ENCODE measurements at regions of chr14 and their contacts with region 1.

Region 1: GRCh38 chr14:21428930-21429329 is 27.0 kb downstream of the CHD8 start:
- DNase-seq: peak; percentile 61
- ATAC-seq: peak; percentile 90

Region 2: DNA sequence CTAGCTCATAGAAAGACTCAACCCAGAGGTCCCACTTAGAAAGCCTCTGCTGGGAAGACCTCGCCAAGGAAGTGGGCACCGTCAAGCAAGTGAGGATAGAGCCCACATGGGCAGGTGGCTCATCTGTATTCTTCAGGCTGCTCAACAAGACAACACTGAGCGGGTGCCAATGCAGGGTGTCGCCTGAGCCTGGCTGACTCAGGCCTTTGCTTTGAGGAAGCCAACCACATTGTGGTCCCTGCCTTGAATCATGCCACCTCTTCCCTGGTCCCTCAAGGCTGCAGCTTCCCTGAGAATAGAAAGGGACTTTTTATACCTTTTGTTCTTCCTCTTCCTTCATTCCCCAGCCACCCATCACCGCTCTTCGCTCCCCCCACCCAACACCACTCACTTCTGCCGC is 392.2 kb before region 1 on chr14:
- intact Hi-C with region 1: no loop called
- DNase-seq: no peak
- ATAC-seq: no peak

Region 3: DNA sequence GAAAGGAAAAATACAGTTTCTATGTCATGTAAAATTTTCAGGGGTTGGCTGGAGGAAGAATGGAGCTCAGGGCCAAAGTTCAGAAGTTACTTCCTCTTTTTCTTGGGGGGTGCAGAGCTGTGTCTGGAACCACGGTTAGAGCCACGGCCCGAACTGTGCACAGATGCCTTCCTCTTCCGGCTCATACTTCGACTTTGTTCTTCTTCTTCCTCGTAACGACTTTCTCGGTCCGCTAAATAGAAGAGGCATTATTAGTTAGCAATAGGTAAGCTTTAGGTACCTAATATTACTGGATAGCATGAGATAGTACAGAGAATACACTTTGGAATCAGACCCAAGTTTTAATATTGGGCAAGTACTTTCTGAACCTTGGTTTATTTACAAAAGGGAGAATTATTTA is 76.3 kb before region 1 on chr14:
- intact Hi-C with region 1: no loop called
- DNase-seq: peak; percentile 38
- ATAC-seq: peak; percentile 48

Region 4: DNA sequence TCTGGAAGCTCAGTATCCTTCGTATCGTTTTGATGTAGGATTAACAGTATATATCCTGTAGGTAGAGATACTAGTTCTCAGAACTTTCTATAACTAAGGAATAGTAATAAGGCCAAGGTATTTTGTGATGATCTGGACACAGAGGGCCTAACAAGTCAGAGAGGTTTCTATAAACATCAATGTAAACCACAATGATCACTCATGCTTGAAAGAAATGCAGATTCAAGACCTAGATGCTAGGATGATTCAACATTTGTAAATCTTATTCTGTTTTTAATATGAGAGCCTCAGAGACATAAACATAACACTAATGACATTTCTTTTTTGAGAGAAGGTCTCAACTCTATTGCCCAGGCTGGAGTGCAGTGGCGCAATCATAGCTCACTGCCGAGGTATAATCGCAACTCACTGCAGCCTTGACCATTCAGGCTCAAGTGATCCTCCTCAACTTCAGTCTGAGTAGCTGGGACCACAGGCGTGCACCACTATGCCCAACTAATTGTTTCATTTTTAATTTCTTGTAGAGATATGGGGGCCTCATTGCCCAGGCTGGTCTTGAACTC is 61.3 kb before region 1 on chr14:
- intact Hi-C with region 1: loop called (anchors 10 kb)
- DNase-seq: no peak
- ATAC-seq: no peak

Measured in left ventricle myocardium superior (tissue), 1 donor.